Mammary epithelial cell (primary cell): ENCODE measurements at regions of chr3 and their contacts with region 1.

Region 1: GRCh38 chr3:183369117-183369516 is 59.3 kb downstream of the MCF2L2 start:
- DNase-seq: no peak
- H3K4me3 ChIP-seq: no peak overlapping the region
- H3K27ac ChIP-seq: peak overlapping the region; percentile 95
- H3K4me1 ChIP-seq: peaks cover 28% of the 10 kb centered on the region
- H3K27me3 ChIP-seq: no peaks in the 10 kb centered on the region
- CTCF ChIP-seq: no peak

Region 2: GRCh38 chr3:181717549-181718101 is 1651.5 kb before region 1 on chr3:
- CTCF ChIA-PET with region 1: interaction called, 11 read pairs
- dilution Hi-C with region 1: no loop called
- in situ Hi-C with region 1: no loop called
- intact Hi-C with region 1: no loop called
- DNase-seq: no peak
- H3K4me3 ChIP-seq: no peak overlapping the region
- H3K27ac ChIP-seq: no peak overlapping the region
- H3K4me1 ChIP-seq: peaks cover 3% of the 10 kb centered on the region
- H3K27me3 ChIP-seq: peaks cover 86% of the 10 kb centered on the region
- CTCF ChIP-seq: no peak

Region 3: DNA sequence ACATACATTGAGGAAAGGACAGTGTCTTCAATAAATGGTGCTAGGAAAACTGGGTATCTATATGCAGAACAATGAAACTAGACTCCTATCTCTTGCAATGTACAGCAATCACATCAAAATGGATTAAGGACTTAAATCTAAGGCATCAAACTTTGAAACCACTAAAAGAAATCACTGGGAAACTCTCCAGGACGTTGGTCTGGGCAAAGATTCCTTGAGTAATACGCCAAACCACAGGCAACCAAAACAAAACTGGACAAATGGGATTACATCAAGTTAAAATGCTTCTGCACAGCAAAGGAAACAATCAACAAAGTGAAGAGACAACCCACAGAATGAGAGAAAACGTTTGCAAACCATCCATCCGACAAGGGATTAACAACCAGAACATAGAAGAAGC is 221.1 kb before region 1 on chr3:
- CTCF ChIA-PET with region 1: no interaction called
- dilution Hi-C with region 1: no loop called
- in situ Hi-C with region 1: no loop called
- intact Hi-C with region 1: no loop called
- DNase-seq: peak; percentile 49
- H3K4me3 ChIP-seq: no peak overlapping the region
- H3K27ac ChIP-seq: no peak overlapping the region
- H3K4me1 ChIP-seq: no peaks in the 10 kb centered on the region
- H3K27me3 ChIP-seq: no peaks in the 10 kb centered on the region
- CTCF ChIP-seq: no peak

Region 4: DNA sequence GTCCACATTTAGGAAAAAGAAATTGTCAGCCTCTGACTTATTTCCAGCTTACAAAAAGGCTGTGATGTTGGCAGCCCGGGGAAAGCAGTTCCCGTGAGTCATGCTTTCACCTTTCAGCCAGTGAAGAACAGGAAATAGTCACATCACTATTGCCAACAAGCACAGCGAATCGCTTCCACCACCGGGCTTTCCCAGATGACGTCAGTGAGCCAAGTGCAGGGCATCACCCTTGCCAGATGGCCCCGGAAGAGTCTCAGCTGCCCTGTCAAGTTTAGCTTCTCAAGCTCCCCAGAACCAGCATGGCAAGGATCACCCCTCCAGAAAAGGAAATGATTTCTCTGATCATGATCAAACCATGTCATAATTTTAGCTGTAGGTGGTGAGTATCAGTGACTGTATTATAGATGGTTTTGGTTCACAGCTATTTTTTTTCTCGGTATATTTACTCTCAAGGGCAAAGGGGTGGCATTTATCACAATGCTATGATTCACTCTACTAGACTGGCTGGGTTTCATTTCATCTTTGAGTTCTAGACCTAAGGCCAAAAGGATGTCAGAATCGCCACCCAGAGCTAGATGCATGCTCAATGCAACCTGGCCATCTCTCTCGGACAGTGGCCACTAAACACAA is 83.2 kb before region 1 on chr3:
- CTCF ChIA-PET with region 1: no interaction called
- dilution Hi-C with region 1: no loop called
- in situ Hi-C with region 1: no loop called
- intact Hi-C with region 1: loop called (anchors 2 kb)
- DNase-seq: peak; percentile 100
- H3K4me3 ChIP-seq: no peak overlapping the region
- H3K27ac ChIP-seq: peak overlapping the region; percentile 92
- H3K4me1 ChIP-seq: peaks cover 24% of the 10 kb centered on the region
- H3K27me3 ChIP-seq: no peaks in the 10 kb centered on the region
- CTCF ChIP-seq: no peak

Region 5: DNA sequence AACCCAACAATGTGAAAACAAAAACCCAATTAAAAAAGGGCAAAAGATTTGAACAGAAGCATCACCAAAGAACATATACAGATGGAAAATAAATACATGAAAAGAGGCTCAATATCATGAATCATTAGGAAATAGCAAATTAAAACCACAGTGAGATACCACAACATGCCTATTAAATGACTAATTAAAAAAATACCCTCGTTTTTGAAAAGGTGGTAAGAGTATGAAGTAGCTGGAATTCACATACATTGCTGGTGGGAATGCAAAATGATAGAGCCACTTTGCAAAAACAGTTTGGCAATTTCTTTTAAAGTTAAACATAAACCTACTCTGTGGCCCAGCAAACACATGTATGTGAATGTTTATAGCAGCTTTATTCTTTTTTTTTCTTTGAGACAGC is 40.3 kb before region 1 on chr3:
- CTCF ChIA-PET with region 1: no interaction called
- dilution Hi-C with region 1: no loop called
- in situ Hi-C with region 1: no loop called
- intact Hi-C with region 1: loop called (anchors 2 kb)
- DNase-seq: peak; percentile 76
- H3K4me3 ChIP-seq: no peak overlapping the region
- H3K27ac ChIP-seq: no peak overlapping the region
- H3K4me1 ChIP-seq: peaks cover 19% of the 10 kb centered on the region
- H3K27me3 ChIP-seq: no peaks in the 10 kb centered on the region
- CTCF ChIP-seq: no peak